Psoas muscle (tissue), 8 donors: ENCODE measurements at regions of chr17 and their contacts with region 1.

Region 1: DNA sequence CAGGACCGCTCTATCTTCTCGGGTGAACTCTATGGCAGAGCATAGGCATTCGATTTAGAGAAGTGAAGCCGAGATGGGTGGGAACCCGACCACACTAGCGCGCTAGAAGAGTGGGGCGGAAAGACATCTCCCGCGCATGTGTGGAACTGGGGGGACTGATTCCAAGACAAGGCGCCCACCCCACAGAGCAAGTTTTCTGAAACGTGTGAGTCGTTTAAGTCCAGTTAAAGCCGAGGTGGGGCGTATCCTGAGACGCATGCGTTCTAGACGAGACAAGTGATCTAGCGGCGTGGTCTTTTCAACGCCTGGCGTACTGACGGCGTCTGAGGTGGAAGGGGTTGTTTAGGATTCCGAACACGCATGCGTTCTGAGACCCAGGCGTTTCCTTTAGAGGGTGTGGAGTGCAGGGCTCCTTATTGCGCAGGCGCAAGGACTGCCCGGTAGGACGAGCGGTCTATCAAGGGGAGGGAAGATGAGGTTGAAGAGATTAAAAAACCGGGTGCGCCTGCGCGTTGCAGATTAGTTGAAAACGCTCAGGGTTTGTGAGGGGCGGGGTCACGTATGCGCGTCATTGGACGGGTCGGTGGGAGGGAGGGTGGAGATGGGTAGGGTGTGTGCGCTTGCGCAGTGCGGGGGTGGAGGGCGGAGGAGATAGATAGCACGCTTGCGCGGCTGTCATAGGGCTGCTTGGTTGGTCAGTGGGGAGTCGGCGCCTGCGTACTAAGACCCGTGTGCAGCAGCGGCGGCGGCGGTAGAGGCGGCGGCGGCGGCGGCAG is at the start of gene EIF5A:
- DNase-seq: peak; percentile 100
- ATAC-seq: peak; percentile 86 to 88 (median 88)
- H3K4me3 ChIP-seq: peak within 1 kb of the TSS; percentile 94
- H3K27ac ChIP-seq: peak within 1 kb of the TSS; percentile 98
- H3K4me1 ChIP-seq: peaks cover 28% of the 10 kb centered on the region
- H3K27me3 ChIP-seq: no peaks in the 10 kb centered on the region
- CTCF ChIP-seq: no peak
- total RNA-seq, gene EIF5A: 293 to 730 (median 567) TPM

Region 2: GRCh38 chr17:7266784-7267183 is 40.3 kb before region 1 on chr17:
- intact Hi-C with region 1: loop called in 1 of 2 experiments (anchors 5 kb)
- DNase-seq: no peak
- ATAC-seq: no peak
- H3K4me3 ChIP-seq: no peak overlapping the region
- H3K27ac ChIP-seq: no peak overlapping the region
- H3K4me1 ChIP-seq: peaks cover 4% of the 10 kb centered on the region
- H3K27me3 ChIP-seq: peaks cover 0 to 36% (median 16%) of the 10 kb centered on the region in 3 donors
- CTCF ChIP-seq: no peak